Naive thymus-derived CD4-positive, alpha-beta T cell (primary cell): ENCODE measurements at regions of chr1 and their contacts with region 1.

Region 1: DNA sequence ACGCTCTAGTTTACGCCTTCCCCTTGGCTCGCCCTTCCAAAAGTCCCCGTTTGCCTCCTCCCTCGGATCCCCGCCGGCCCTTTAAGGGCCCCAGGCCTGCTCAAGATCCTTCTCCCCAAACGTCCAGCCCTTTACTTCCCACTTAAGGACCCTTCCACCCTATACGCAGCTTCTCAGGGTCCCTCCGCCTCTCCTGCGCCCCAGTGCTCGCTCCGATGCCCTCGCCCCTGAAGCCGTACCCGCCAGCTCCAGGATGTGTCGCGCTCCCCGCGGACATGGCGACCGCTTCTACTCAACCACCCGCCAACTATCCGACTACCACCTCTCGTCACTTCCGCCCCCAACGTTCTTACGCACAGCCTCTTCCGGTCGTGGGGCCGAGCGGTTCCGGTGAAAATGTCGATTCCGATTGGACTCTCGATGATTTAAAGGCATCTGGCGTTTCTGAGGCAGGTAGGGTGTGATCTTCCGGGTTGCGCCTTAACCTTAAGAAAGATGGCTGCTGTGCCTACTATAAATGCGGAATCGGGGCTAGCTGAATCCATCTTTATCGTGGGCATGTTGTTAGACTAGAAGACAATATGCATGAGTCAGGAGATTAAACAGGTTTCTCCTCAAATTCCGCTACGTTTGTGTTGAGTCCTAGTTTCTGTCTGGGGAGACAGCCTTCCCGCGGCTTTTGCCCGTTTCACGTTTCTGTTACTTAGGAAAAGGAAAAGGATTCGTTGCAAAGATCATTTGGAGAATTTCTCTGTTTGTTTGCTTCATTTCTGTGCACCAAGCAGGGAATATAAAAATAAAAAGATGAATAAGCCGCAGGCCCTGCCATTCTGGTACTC is at the start of gene KHDC4:
- DNase-seq: peak; percentile 79 to 98 (median 97)
- ATAC-seq: peak; percentile 97
- H3K4me3 ChIP-seq: peak within 1 kb of the TSS; percentile 87
- H3K4me3 Mint-ChIP-seq: no peak within 1 kb of the TSS
- H3K27ac ChIP-seq: peak within 1 kb of the TSS; percentile 89
- H3K27ac Mint-ChIP-seq: peak within 1 kb of the TSS in 1 of 9 donors; percentile 22
- H3K4me1 ChIP-seq: peaks cover 40 to 42% of the 10 kb centered on the region in 2 donors
- H3K4me1 Mint-ChIP-seq: peaks cover 15 to 42% (median 37%) of the 10 kb centered on the region in 7 donors
- H3K27me3 ChIP-seq: no peaks in the 10 kb centered on the region
- H3K27me3 Mint-ChIP-seq: no peaks in the 10 kb centered on the region
- total RNA-seq, gene KHDC4: 64.6 to 117 (median 79.8) TPM

Region 2: DNA sequence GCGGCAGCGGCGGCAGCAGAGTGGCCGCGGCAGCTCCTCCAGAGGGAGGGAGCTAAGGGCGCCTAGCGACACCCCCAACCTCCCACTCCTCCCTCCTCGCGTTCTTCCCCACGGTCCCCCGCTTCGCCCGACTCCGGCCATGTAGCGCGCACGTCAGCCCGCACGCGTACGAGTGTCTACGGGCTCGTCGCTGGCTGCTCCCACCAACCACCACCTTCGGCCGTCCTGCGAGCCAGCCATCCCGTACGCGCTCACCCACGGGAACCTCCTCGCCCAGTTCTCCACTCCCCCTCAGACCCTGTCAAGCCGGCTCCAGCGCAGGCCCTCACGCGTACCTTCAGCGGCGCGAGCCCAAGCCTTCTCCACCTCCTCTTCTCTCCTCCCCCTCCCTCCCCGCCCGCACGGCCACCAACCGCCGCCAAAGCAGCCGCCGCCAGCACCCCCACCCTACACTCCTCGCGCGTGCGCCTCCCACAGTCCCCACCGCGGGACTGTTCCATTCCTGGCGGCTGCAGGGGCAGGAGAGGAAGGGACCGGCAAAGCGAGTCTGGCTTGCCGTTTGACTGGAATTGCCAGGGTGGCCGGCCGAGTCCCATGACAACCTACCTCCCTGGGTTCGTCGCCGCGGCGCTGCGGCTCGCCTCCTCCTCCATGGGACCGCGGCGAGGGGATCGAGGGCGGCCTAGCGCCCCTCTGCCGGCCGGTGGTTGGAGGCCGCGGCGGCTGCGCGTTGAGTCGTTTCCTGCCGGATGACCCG is 245.8 kb before region 1 on chr1 and contains the start of gene YY1AP1:
- CTCF ChIA-PET with region 1: no interaction called
- POLR2A ChIA-PET with region 1: no interaction called
- intact Hi-C with region 1: loop called in 1 of 2 experiments (anchors 1 kb)
- DNase-seq: peak; percentile 87 to 96 (median 92)
- ATAC-seq: peak; percentile 96
- H3K4me3 ChIP-seq: peak within 1 kb of the TSS; percentile 99
- H3K4me3 Mint-ChIP-seq: peak within 1 kb of the TSS; percentile 93 to 98 (median 96)
- H3K27ac ChIP-seq: peak within 1 kb of the TSS; percentile 91
- H3K27ac Mint-ChIP-seq: peak within 1 kb of the TSS; percentile 90 to 98 (median 96)
- H3K4me1 ChIP-seq: peaks cover 15 to 30% of the 10 kb centered on the region in 2 donors
- H3K4me1 Mint-ChIP-seq: peaks cover 37 to 81% (median 70%) of the 10 kb centered on the region in 7 donors
- H3K27me3 ChIP-seq: no peaks in the 10 kb centered on the region
- H3K27me3 Mint-ChIP-seq: no peaks in the 10 kb centered on the region
- total RNA-seq, gene YY1AP1: 81.2 to 130 (median 88.2) TPM

Region 3: DNA sequence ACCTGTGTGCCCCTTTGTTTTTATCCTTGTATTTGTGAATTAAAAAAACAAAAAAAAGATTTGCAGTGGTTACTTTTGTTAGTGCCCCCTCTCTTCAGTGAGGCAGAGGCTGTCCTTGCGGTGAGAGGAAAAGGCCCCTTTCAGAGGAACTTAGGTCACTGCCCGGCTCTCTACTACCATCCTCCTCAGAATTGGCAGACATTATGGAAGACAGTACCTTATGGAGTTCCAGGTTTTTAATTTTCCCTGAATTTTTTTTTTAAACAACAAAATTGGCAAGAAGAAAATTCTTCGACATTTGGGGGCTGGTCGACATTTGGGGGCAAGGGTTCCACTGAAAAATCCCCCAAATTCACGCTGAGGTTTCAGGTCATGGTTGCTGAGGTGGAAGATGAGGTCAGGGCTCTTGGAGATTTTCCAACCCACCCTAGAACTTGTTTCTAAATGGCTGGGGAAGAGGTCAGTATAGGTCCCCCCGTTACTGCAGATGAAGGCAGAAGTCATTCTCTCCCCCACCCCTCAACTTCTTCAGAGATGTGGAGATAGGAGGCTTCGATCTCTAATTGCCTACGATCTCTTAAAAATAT is 12.4 kb after region 1 on chr1:
- CTCF ChIA-PET with region 1: interaction called, 3 read pairs
- POLR2A ChIA-PET with region 1: interaction called, 41 read pairs
- intact Hi-C with region 1: loop called (anchors 1 kb)
- DNase-seq: no peak
- ATAC-seq: no peak
- H3K4me3 ChIP-seq: no peak overlapping the region
- H3K4me3 Mint-ChIP-seq: peak overlapping the region in 9 of 10 donors; percentile 16 to 87 (median 63)
- H3K27ac ChIP-seq: peak overlapping the region; percentile 65
- H3K27ac Mint-ChIP-seq: peak overlapping the region; percentile 81 to 99 (median 89)
- H3K4me1 ChIP-seq: peaks cover 20 to 27% of the 10 kb centered on the region in 2 donors
- H3K4me1 Mint-ChIP-seq: peaks cover 28 to 54% (median 41%) of the 10 kb centered on the region in 7 donors
- H3K27me3 ChIP-seq: no peaks in the 10 kb centered on the region
- H3K27me3 Mint-ChIP-seq: no peaks in the 10 kb centered on the region

Region 4: DNA sequence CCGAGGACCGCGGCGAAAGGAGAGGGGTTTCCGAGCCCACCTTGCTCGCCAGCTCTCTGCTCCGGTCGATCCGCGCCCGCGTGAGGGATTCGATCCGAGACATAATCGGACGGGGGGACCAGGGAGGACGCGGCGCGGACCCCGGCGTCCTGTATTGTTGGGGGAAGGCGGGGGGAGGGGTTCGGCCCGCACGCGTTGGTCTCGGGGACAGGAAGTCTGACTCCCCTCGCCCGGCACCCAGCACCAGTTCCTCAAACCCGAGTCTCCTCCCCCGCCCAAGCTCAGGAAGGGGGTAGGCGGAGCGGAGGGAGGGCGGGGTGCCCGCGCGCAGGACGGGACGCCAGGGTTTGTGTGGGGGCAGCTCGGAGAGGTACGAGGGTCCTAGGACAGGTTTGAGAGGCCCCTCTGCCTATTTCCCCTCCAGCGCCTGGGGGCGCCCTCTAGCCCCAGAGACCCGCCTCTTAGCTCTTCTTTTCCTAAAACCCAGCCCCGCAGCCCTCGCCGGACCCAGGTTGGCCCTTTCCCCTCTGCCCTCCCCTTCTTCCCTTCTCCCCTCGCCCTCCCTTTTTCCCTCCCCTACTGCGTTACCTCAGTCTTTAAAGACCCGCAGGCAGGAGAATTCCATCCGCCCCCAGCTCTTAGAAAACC is 44.1 kb after region 1 on chr1 and contains the start of gene ARHGEF2:
- CTCF ChIA-PET with region 1: interaction called, 12 read pairs
- POLR2A ChIA-PET with region 1: interaction called, 47 read pairs
- intact Hi-C with region 1: loop called (anchors 1 to 2 kb)
- DNase-seq: peak; percentile 49 to 81 (median 68)
- ATAC-seq: peak; percentile 78
- H3K4me3 ChIP-seq: peak within 1 kb of the TSS; percentile 74
- H3K4me3 Mint-ChIP-seq: peak within 1 kb of the TSS; percentile 89 to 98 (median 94)
- H3K27ac ChIP-seq: peak within 1 kb of the TSS; percentile 90
- H3K27ac Mint-ChIP-seq: peak within 1 kb of the TSS; percentile 77 to 98 (median 95)
- H3K4me1 ChIP-seq: peaks cover 55 to 58% of the 10 kb centered on the region in 2 donors
- H3K4me1 Mint-ChIP-seq: peaks cover 59 to 79% (median 69%) of the 10 kb centered on the region in 7 donors
- H3K27me3 ChIP-seq: no peaks in the 10 kb centered on the region
- H3K27me3 Mint-ChIP-seq: no peaks in the 10 kb centered on the region
- total RNA-seq, gene ARHGEF2: 108 to 236 (median 182) TPM

Region 5: GRCh38 chr1:156020292-156021089 is 86.2 kb after region 1 on chr1 and contains the start of gene SSR2:
- CTCF ChIA-PET with region 1: no interaction called
- POLR2A ChIA-PET with region 1: interaction called, 3 read pairs
- intact Hi-C with region 1: loop called (anchors 1 kb)
- DNase-seq: peak; percentile 44 to 91 (median 84)
- ATAC-seq: peak; percentile 99
- H3K4me3 ChIP-seq: peak within 1 kb of the TSS; percentile 87
- H3K4me3 Mint-ChIP-seq: peak within 1 kb of the TSS; percentile 87 to 99 (median 96)
- H3K27ac ChIP-seq: peak within 1 kb of the TSS; percentile 74
- H3K27ac Mint-ChIP-seq: peak within 1 kb of the TSS; percentile 89 to 99 (median 95)
- H3K4me1 ChIP-seq: peaks cover 4 to 9% of the 10 kb centered on the region in 2 donors
- H3K4me1 Mint-ChIP-seq: peaks cover 20 to 47% (median 41%) of the 10 kb centered on the region in 7 donors
- H3K27me3 ChIP-seq: no peaks in the 10 kb centered on the region
- H3K27me3 Mint-ChIP-seq: peaks cover 0 to 12% (median 0%) of the 10 kb centered on the region in 5 donors
- total RNA-seq, gene SSR2: 207 to 278 (median 256) TPM

Region 6: GRCh38 chr1:156193488-156194299 is 259.4 kb after region 1 on chr1 and contains the start of gene SLC25A44:
- CTCF ChIA-PET with region 1: no interaction called
- POLR2A ChIA-PET with region 1: no interaction called
- intact Hi-C with region 1: loop called in 1 of 2 experiments (anchors 1 kb)
- DNase-seq: peak; percentile 94 to 98 (median 97)
- ATAC-seq: peak; percentile 99
- H3K4me3 ChIP-seq: peak within 1 kb of the TSS; percentile 92
- H3K4me3 Mint-ChIP-seq: peak within 1 kb of the TSS; percentile 83 to 99 (median 97)
- H3K27ac ChIP-seq: peak within 1 kb of the TSS; percentile 86
- H3K27ac Mint-ChIP-seq: peak within 1 kb of the TSS; percentile 85 to 97 (median 93)
- H3K4me1 ChIP-seq: peaks cover 12 to 31% of the 10 kb centered on the region in 2 donors
- H3K4me1 Mint-ChIP-seq: peaks cover 22 to 53% (median 45%) of the 10 kb centered on the region in 7 donors
- H3K27me3 ChIP-seq: no peaks in the 10 kb centered on the region
- H3K27me3 Mint-ChIP-seq: no peaks in the 10 kb centered on the region
- total RNA-seq, gene SLC25A44: 17.8 to 38.4 (median 19.6) TPM